ENCODE measurements at regions of chr1 and their contacts with region 1.

Region 1: DNA sequence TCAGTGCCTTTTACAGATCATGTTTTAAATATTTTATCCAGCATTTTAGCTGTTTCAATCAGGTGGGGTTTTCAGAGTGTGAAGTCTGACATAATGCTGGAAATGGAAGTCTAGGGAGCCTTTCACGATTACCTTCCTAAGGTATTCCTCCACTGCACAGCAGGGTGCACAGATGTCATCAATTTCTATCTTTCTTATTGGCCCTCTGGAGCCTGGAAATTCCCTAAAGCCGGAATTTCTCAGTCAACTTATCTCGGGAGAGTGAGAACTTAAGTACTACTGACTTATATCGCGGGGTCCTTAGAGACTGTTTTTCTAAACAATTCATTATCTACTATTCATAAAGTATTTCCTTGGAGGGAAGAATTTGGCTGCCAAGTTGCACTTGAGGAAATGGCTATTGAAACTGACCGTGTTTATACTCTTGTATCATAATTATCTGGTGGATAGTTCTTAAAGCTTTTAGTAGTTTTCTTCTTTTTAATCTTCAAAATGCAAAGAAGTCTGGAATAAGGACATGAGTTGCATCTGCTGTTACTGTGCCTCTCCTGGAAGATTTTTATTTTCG is 311.8 kb upstream of the B3GALT2 start:
- DNase-seq: no peak
- ATAC-seq: no peak
- H3K4me3 ChIP-seq: no peak overlapping the region
- H3K4me3 Mint-ChIP-seq: no peak overlapping the region
- H3K27ac ChIP-seq: no peak overlapping the region
- H3K27ac Mint-ChIP-seq: no peak overlapping the region
- H3K4me1 ChIP-seq: no peaks in the 10 kb centered on the region
- H3K4me1 Mint-ChIP-seq: peaks cover 7 to 31% (median 19%) of the 10 kb centered on the region in 3 donors
- H3K27me3 ChIP-seq: no peaks in the 10 kb centered on the region
- H3K27me3 Mint-ChIP-seq: no peaks in the 10 kb centered on the region

Region 2: DNA sequence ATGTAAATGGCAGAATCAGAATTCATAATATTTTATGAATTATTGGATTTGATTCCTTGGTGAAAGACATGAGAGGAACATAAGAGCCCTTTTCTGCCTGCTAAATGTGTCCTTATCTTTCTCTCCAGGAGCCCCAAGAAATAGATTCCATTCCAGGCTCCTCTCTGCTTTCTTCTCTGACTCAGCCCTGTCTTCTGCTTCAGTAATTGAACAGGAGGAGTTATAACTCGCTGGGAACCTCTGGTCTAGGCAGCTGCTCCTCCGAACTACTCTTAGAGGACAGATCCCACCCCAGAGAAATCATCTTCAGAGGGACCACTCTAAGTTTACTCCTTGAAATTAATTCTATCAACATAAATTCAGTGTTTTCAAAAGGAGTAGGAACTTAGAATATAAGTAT is 1103.0 kb before region 1 on chr1:
- CTCF ChIA-PET with region 1: no interaction called
- POLR2A ChIA-PET with region 1: no interaction called
- DNase-seq: no peak
- ATAC-seq: no peak
- H3K4me3 ChIP-seq: no peak overlapping the region
- H3K4me3 Mint-ChIP-seq: no peak overlapping the region
- H3K27ac ChIP-seq: no peak overlapping the region
- H3K27ac Mint-ChIP-seq: no peak overlapping the region
- H3K4me1 ChIP-seq: no peaks in the 10 kb centered on the region
- H3K4me1 Mint-ChIP-seq: no peaks in the 10 kb centered on the region
- H3K27me3 ChIP-seq: no peaks in the 10 kb centered on the region
- H3K27me3 Mint-ChIP-seq: no peaks in the 10 kb centered on the region

Region 3: DNA sequence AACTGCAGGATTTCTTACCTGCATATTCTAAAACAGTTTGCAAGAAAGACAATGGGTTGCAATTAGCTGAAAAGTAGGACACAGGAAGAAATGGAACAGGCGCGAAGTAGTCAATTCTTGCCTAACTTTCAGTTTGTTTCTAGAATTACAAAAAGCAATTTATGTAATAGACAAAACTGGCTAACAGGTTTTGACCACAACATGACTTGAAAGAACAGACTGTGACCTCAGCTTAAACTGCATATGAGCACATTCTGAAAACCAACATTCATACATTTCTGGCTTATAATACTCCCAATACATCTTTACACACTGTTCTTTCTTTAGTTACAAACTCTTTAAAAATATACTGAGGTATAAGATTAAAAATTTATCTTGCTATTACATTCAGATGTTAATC is 94.1 kb after region 1 on chr1:
- CTCF ChIA-PET with region 1: no interaction called
- POLR2A ChIA-PET with region 1: no interaction called
- DNase-seq: peak in 1 of 35 experiments; percentile 50
- ATAC-seq: peak in 3 of 4 experiments; percentile 33 to 81 (median 45)
- H3K4me3 ChIP-seq: peak overlapping the region in 1 of 2 donors; percentile 6
- H3K4me3 Mint-ChIP-seq: peak overlapping the region in 2 of 3 donors; percentile 26 to 44
- H3K27ac ChIP-seq: peak overlapping the region; percentile 64
- H3K27ac Mint-ChIP-seq: peak overlapping the region; percentile 82 to 89
- H3K4me1 ChIP-seq: no peaks in the 10 kb centered on the region
- H3K4me1 Mint-ChIP-seq: peaks cover 19 to 49% (median 39%) of the 10 kb centered on the region in 3 donors
- H3K27me3 ChIP-seq: no peaks in the 10 kb centered on the region
- H3K27me3 Mint-ChIP-seq: no peaks in the 10 kb centered on the region

Region 4: DNA sequence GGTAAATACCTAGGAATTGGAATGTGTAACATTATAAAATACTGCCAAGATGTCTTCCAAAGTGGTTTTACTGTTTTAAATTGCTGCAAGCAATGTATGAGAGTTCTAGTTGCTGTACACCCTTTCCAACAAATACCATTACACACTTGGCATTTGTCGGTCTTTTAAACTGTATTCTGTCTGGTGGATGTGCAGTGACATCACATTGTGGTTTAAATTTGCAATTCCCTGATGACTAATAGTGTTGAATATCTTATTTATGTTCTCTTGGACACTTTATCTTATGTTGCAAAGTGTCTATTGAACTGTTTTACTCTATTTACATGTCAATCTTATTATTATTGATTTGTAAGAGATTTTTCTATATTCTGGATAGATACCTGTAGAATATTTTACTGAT is 249.4 kb after region 1 on chr1:
- CTCF ChIA-PET with region 1: no interaction called
- POLR2A ChIA-PET with region 1: interaction called in 1 of 2 experiments, 11 read pairs
- DNase-seq: no peak
- ATAC-seq: no peak
- H3K4me3 ChIP-seq: no peak overlapping the region
- H3K4me3 Mint-ChIP-seq: no peak overlapping the region
- H3K27ac ChIP-seq: no peak overlapping the region
- H3K27ac Mint-ChIP-seq: no peak overlapping the region
- H3K4me1 ChIP-seq: no peaks in the 10 kb centered on the region
- H3K4me1 Mint-ChIP-seq: peaks cover 0 to 1% (median 0%) of the 10 kb centered on the region in 3 donors
- H3K27me3 ChIP-seq: no peaks in the 10 kb centered on the region
- H3K27me3 Mint-ChIP-seq: no peaks in the 10 kb centered on the region